PC-3 (cell line): ENCODE measurements at regions of chr13 and their contacts with region 1.

Region 1: DNA sequence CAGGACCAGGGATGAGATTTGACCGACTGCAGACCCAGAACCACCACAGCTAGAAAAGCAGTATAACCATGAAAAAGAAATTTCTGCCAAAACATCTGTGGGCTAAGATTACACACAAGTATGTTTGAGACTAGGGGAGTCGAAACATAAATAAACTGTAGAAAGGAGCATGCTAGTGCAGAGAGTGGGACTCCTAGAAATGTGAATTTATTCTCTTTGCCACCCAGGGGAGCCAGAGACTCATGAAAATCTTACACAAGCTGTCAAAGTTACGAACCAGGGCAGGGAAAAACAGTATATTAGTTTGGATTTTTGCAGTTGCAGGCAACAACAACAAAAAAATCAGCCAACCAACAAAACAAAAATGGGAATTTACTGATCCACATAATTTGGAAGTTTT is 12.3 kb upstream of the HSPH1 start:
- DNase-seq: peak; percentile 38
- ATAC-seq: peak; percentile 45
- H3K4me3 ChIP-seq: no peak overlapping the region
- H3K27ac ChIP-seq: no peak overlapping the region
- H3K4me1 ChIP-seq: peaks cover 29% of the 10 kb centered on the region
- H3K27me3 ChIP-seq: no peaks in the 10 kb centered on the region
- CTCF ChIP-seq: peak; percentile 45

Region 2: GRCh38 chr13:31199849-31200636 is 26.0 kb after region 1 on chr13 and contains the start of gene B3GLCT:
- CTCF ChIA-PET with region 1: no interaction called
- POLR2A ChIA-PET with region 1: no interaction called
- intact Hi-C with region 1: loop called (anchors 1 kb)
- DNase-seq: peak; percentile 87
- ATAC-seq: peak; percentile 80
- H3K4me3 ChIP-seq: peak within 1 kb of the TSS; percentile 78
- H3K27ac ChIP-seq: no peak within 1 kb of the TSS
- H3K4me1 ChIP-seq: peaks cover 24% of the 10 kb centered on the region
- H3K27me3 ChIP-seq: no peaks in the 10 kb centered on the region
- CTCF ChIP-seq: peak; percentile 63
- total RNA-seq, gene B3GLCT: 3.2 TPM in 2 replicates

Region 3: DNA sequence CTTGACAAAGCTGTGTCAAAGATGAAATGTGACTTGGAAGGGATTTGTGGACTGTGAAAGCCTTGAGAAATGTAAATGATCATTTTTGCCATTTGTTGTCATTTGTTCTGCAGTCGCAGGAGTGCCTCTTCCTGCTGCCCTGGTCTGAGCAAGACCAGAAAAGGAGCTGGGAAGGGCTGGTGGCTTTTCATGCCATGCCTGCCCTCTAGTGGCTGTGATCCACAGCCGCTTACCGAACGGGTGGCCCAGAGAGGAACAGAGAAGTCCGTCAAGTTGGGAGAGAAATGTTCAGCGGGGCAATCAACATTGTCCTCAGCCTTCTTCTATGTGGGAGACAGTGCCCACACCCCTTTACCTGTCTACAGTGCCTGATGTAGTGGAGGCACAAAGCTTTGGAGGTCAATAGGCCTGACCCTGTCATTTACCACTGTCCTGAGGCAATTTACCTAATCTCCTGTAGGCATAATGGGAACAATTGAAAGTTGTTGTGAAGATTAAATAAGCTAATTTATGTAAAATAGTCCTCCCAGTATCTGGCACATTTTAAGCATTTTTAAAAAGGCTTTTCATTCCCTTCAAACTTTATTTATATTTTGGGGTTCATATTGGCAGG is 250.2 kb after region 1 on chr13:
- CTCF ChIA-PET with region 1: interaction called, 3 read pairs
- POLR2A ChIA-PET with region 1: no interaction called
- intact Hi-C with region 1: loop called (anchors 1 kb)
- DNase-seq: peak; percentile 83
- ATAC-seq: peak; percentile 100
- H3K4me3 ChIP-seq: no peak overlapping the region
- H3K27ac ChIP-seq: no peak overlapping the region
- H3K4me1 ChIP-seq: 0 out of 2 replicates have a peak, but pooled peaks cover 4% of the 10 kb centered on the region
- H3K27me3 ChIP-seq: peaks cover 18% of the 10 kb centered on the region; the same call in 1 of the 2 replicates
- CTCF ChIP-seq: peak; percentile 90